AG04450 (cell line): ENCODE measurements at regions of chr1 and their contacts with region 1.

Region 1: DNA sequence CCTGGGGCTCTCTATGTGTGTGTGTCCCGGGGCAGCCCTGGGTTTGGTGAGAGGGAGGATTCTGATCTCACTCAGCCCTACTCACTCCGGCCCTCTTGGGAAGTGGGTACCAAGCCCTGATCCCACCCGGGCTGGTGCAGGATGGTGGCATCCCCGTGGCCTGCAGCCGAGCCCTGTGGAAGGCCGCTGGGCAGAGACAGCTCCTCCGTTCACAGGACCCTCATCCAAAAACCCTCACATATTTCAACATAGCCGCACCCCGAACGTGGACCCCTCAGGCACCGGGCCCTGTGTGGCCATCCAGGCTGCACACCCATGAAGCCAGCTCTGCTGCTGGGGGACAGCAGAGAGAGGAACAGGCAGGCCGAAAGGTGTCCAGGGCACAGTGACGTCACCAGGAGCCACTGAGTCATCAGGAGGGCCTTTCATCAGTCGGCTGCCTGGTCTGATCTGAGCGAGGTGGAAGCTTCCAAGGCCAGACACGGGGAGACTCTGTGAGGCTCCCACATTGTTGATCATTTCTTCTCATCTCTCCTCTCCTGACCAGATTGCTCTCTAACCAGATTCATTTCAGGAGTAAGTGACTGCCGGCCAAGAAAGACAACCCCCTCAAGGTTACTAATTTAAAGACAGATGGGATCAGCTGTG is 16.2 kb upstream of the GPR157 start:
- DNase-seq: no peak
- H3K4me3 ChIP-seq: no peak overlapping the region
- H3K27ac ChIP-seq: no peak overlapping the region
- H3K27me3 ChIP-seq: no peaks in the 10 kb centered on the region
- CTCF ChIP-seq: no peak

Region 2: GRCh38 chr1:8439015-8439702 is 706.0 kb before region 1 on chr1:
- CTCF ChIA-PET with region 1: no interaction called
- POLR2A ChIA-PET with region 1: no interaction called
- DNase-seq: peak; percentile 62
- H3K4me3 ChIP-seq: no peak overlapping the region
- H3K27ac ChIP-seq: peak overlapping the region; percentile 79
- H3K27me3 ChIP-seq: no peaks in the 10 kb centered on the region
- CTCF ChIP-seq: no peak

Region 3: DNA sequence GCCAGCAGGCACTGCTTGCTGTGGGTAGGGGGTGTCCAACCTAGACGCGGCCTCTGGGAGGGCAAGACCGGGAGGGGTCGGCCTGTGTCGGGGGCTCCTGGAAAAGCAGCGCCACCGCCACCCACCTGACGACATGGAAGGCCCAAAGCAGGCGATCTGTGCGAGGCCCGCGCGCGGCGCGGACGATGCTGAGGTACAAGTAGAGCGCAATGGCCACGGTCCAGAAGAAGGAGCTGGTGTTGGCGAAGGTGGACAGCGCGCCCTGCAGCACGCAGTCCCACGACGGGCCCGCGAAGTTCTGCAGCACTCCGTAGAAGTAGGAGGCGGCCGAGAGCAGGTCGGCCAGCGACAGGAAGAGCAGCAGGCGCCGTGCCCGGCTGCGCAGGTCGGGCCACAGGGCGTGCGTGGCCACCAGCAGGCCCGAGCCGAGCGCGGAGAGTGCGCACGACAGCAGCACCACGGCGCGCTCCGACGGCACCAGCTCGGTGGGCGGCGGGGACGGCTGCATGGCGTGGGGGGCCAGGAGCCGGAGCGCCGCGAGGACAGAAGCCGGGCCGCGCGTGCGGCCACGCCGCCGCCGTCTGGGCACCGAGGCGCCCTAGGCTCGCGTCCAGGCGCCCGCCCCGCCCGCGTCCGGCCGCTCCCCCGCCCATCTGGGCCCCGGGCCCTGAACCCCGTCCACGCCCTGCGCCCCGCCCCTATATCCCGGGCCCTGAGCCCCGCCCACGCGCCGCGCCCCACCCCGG is 16.5 kb before region 1 on chr1 and contains the start of gene GPR157:
- CTCF ChIA-PET with region 1: interaction called, 11 read pairs
- POLR2A ChIA-PET with region 1: no interaction called
- DNase-seq: no peak
- H3K4me3 ChIP-seq: peak within 1 kb of the TSS; percentile 60
- H3K27ac ChIP-seq: peak within 1 kb of the TSS; percentile 3
- H3K27me3 ChIP-seq: no peaks in the 10 kb centered on the region
- CTCF ChIP-seq: 0 out of 2 replicates have a peak, but pooled peaks have one; percentile 11
- polyA plus RNA-seq, gene GPR157: 1.1 TPM in 2 replicates